ENCODE measurements at regions of chr5 and their contacts with region 1.

Region 1: GRCh38 chr5:58460732-58461286 is 923 bp upstream of the PLK2 start:
- DNase-seq: peak in 1 of 2 donors; percentile 95
- H3K4me3 ChIP-seq: peak overlapping the region; percentile 81 to 87
- H3K27ac ChIP-seq: peak overlapping the region; percentile 94
- H3K4me1 ChIP-seq: peaks cover 17% of the 10 kb centered on the region
- H3K27me3 ChIP-seq: no peaks in the 10 kb centered on the region
- CTCF ChIP-seq: peak; percentile 31 to 87 (median 74)
- POLR2A ChIP-seq: no peak

Region 2: GRCh38 chr5:57298295-57298984 is 1162.4 kb before region 1 on chr5:
- intact Hi-C with region 1: loop called (anchors 2 kb)
- DNase-seq: peak in 1 of 2 donors; percentile 88
- H3K4me3 ChIP-seq: no peak overlapping the region
- H3K27ac ChIP-seq: peak overlapping the region; percentile 2
- H3K4me1 ChIP-seq: peaks cover 10% of the 10 kb centered on the region
- H3K27me3 ChIP-seq: no peaks in the 10 kb centered on the region
- CTCF ChIP-seq: peak; percentile 75 to 80 (median 75)
- POLR2A ChIP-seq: no peak

Region 3: DNA sequence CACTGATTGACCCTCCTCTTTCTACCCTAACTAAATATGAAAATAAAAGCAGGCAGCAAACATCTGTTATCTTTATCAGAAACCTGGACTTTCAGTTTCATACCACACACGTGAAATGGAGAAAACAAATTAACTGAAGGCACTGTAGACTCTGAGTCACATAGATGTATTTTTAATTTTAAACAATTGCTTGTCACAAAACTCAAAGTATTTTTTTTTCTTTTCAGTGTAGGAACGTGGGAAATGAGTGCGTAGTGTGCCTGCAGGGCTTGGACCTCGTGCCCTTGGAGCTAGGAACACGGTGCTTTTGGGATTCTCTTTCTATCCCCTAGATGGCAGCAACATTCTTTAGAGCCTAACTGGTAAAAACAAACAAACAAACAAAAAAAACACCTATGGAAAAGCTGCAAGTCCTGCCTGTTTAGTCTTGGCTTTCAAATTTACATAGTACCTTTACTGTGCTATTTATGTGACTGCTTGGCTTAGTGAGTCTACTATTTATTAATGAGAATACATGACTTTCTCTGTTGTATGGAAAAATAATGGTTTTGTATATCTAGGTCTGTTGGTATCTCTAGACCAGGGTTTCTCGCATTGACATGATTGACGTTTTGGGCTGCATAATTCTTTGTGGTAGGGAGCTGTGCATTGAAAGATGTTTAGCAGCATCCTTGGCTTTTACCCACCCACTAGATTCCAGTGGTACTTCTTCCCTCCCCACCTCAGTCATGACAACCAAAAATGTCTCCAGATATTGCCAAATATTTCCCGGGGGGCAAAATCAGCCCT is 961.4 kb before region 1 on chr5:
- intact Hi-C with region 1: loop called (anchors 2 kb)
- DNase-seq: no peak
- H3K4me3 ChIP-seq: peak overlapping the region in 1 of 2 donors; percentile 17
- H3K27ac ChIP-seq: no peak overlapping the region
- H3K4me1 ChIP-seq: peaks cover 20% of the 10 kb centered on the region
- H3K27me3 ChIP-seq: no peaks in the 10 kb centered on the region
- CTCF ChIP-seq: peak; percentile 24 to 63 (median 52)
- POLR2A ChIP-seq: no peak

Region 4: GRCh38 chr5:57779383-57780223 is 681.2 kb before region 1 on chr5:
- intact Hi-C with region 1: loop called (anchors 5 kb)
- DNase-seq: no peak
- H3K4me3 ChIP-seq: no peak overlapping the region
- H3K27ac ChIP-seq: peak overlapping the region; percentile 22
- H3K4me1 ChIP-seq: peaks cover 48% of the 10 kb centered on the region
- H3K27me3 ChIP-seq: no peaks in the 10 kb centered on the region
- CTCF ChIP-seq: peak; percentile 50 to 71 (median 64)
- POLR2A ChIP-seq: no peak

Region 5: DNA sequence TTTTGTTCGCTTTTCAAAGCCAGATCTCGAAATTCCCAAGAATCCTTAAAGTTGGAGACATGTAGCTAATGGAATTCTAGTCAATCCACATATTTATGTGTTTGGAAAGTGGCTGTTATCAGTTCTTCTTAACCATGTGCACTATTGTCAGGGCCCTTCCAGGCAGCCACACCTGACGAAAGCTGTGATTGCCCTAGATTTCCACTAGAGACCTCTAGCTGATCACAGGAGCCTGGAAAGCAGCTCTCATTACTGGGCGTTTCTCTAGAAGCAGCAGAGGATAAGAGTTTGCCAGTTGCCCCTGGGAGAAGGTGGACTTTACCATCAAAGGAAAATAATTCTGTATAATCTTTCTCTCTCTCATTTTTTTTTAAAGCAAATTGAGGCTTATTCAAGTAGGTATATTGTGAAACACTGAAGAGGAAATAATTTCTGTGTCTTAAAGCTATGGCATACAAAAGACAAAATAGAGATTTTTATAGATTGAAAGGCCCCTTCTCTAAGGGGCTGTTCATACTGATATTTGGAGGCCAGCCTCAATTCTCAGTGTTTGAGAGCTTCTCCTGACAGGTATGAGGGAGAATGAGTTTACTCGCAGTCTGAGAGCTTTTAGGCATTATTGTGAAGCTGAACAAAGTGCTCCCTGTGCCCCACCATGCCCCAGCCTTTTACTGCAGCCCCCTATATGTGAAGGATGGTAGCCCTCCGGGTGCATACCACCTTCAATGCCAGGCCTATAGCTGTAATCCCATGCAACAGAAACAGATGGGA is 572.8 kb before region 1 on chr5:
- intact Hi-C with region 1: loop called (anchors 5 kb)
- DNase-seq: no peak
- H3K4me3 ChIP-seq: no peak overlapping the region
- H3K27ac ChIP-seq: no peak overlapping the region
- H3K4me1 ChIP-seq: no peaks in the 10 kb centered on the region
- H3K27me3 ChIP-seq: no peaks in the 10 kb centered on the region
- CTCF ChIP-seq: peak in 1 of 3 experiments; percentile 27
- POLR2A ChIP-seq: no peak

Region 6: DNA sequence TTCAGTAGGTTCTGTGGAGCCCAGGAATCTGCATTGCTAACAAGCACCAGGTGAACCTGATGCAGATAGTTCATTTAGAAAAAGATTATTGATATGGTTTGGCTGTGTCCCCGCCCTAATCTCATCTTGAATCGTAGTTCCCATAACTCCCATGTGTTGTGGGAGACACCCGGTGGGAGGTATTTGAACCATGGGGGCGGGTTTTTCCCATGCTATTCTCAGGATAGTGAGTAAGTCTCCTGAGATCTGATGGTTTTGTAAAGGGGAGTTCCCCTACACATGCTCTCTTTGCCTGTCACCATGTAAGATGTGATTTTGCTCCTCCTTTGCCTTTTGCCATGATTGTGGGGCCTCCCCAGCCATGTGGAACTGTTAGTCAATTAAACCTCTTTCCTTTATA is 334.1 kb after region 1 on chr5:
- intact Hi-C with region 1: no loop called
- DNase-seq: no peak
- H3K4me3 ChIP-seq: no peak overlapping the region
- H3K27ac ChIP-seq: no peak overlapping the region
- H3K4me1 ChIP-seq: no peaks in the 10 kb centered on the region
- H3K27me3 ChIP-seq: no peaks in the 10 kb centered on the region
- CTCF ChIP-seq: no peak
- POLR2A ChIP-seq: no peak